PC-3 (cell line): ENCODE measurements at regions of chr9 and their contacts with region 1.

Region 1: DNA sequence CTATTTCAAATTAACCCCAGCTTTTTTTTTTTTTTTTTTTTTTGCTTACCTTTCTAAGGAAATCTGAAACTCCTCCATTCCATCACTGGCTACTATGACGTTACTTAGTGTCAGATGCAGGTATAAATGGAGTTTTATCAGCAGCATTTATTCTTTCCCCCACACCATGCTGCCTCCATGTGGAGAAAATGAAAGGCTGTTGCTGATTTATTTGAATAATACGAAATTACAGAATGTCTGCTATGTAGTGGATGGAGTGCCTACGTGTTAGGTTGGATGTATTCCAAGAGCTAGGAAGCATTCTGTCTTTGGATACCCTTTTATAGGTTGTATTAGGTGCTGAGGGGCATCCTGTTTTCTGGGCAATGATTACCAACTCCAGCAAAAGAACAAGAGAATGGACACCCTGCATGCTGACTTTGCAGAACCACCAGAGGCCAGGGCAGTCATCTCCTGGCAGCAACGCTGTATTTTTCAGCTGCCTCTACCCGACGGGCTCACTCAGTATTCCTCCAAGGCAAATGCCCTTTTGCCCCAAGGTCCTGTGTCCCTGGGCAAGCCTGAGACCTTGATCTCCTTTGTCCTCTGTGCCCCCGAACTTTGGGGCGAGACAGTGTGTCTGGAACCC is 199.5 kb downstream of the ALDH1A1 start:
- DNase-seq: peak; percentile 4
- ATAC-seq: no peak
- H3K4me3 ChIP-seq: no peak overlapping the region
- H3K27ac ChIP-seq: no peak overlapping the region
- H3K4me1 ChIP-seq: no peaks in the 10 kb centered on the region
- H3K27me3 ChIP-seq: peaks cover 50% of the 10 kb centered on the region
- CTCF ChIP-seq: peak; percentile 46; the same call in 1 of the 2 replicates

Region 2: GRCh38 chr9:72661401-72662135 is 91.8 kb before region 1 on chr9:
- CTCF ChIA-PET with region 1: no interaction called
- POLR2A ChIA-PET with region 1: no interaction called
- intact Hi-C with region 1: loop called (anchors 10 kb)
- DNase-seq: no peak
- ATAC-seq: no peak
- H3K4me3 ChIP-seq: no peak overlapping the region
- H3K27ac ChIP-seq: no peak overlapping the region
- H3K4me1 ChIP-seq: no peaks in the 10 kb centered on the region
- H3K27me3 ChIP-seq: peaks cover 23% of the 10 kb centered on the region
- CTCF ChIP-seq: no peak

Region 3: GRCh38 chr9:72773570-72773969 is 20.2 kb after region 1 on chr9:
- CTCF ChIA-PET with region 1: no interaction called
- POLR2A ChIA-PET with region 1: no interaction called
- intact Hi-C with region 1: no loop called
- DNase-seq: no peak
- ATAC-seq: no peak
- H3K4me3 ChIP-seq: no peak overlapping the region
- H3K27ac ChIP-seq: no peak overlapping the region
- H3K4me1 ChIP-seq: no peaks in the 10 kb centered on the region
- H3K27me3 ChIP-seq: peaks cover 15% of the 10 kb centered on the region; the same call in 1 of the 2 replicates
- CTCF ChIP-seq: no peak